Pancreas (tissue), 10 donors: ENCODE measurements at regions of chr1 and their contacts with region 1.

Region 1: GRCh38 chr1:205335643-205336091 is 14.1 kb upstream of the NUAK2 start:
- DNase-seq: peak; percentile 84 to 94 (median 90)
- ATAC-seq: peak; percentile 93 to 100 (median 98)
- H3K4me3 ChIP-seq: no peak overlapping the region
- H3K27ac ChIP-seq: no peak overlapping the region
- H3K4me1 ChIP-seq: no peaks in the 10 kb centered on the region
- H3K27me3 ChIP-seq: no peaks in the 10 kb centered on the region
- CTCF ChIP-seq: peak; percentile 90 to 98 (median 94)

Region 2: DNA sequence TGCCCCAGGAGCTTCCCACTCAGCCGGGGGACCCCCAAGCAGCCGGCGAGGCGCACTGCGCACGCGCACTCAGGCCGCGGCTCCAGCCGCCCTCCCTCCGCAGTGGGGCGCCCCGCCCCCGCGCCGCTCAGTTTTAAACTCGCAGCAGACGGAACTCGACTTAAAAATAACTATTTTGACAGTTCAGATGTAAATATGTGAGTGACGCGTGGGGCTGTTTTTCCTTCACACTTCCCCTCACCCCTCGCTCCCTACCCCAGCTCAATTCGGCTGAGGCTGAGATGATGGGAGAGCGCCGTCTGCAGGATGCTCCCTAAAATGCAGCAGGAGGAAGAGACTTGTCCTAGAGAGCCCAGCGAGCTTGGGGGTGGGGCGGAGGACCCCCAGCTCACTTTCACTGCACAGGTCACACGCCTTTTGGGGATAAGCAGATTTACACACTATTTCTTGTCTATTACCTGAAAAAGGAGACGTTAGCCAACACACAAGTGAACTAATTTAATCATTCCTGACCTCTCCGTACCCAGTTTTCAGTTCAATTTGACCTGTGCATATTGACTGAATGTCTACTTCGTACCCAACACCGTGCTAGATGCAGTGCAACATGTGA is 95.1 kb after region 1 on chr1:
- intact Hi-C with region 1: loop called in 2 of 3 experiments (anchors 5 to 10 kb)
- DNase-seq: peak; percentile 41 to 84 (median 60)
- ATAC-seq: peak; percentile 72 to 97 (median 89)
- H3K4me3 ChIP-seq: peak overlapping the region; percentile 19 to 54 (median 39)
- H3K27ac ChIP-seq: no peak overlapping the region
- H3K4me1 ChIP-seq: no peaks in the 10 kb centered on the region
- H3K27me3 ChIP-seq: no peaks in the 10 kb centered on the region
- CTCF ChIP-seq: peak; percentile 47 to 89 (median 70)

Region 3: DNA sequence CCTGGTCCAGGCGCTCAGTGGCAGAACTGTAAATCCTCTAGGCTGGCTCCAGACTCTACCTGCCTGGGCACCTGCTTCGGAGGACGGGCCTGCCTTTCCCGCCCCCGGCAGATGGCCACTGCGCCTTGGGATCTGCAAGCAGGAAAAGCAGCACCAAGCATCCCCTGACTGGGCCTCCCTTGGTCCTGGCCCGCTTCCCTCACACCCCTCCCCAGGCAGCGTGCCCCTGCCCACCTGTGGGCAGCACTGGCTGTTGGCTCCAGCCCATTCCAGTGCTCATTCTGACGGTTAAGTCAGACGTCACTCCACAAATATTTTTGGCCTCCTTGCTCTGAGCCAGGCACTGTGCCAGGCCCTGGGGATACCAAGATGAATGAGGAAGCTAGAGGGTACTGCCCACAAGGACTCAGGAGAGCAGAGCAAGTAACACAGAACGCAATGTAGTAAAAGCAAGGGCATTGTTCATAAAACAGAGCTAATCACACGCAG is 142.1 kb after region 1 on chr1:
- intact Hi-C with region 1: loop called in 2 of 3 experiments (anchors 5 to 10 kb)
- DNase-seq: peak; percentile 60 to 87 (median 82)
- ATAC-seq: peak; percentile 76 to 86 (median 84)
- H3K4me3 ChIP-seq: no peak overlapping the region
- H3K27ac ChIP-seq: peak overlapping the region; percentile 75 to 83 (median 81)
- H3K4me1 ChIP-seq: no peaks in the 10 kb centered on the region
- H3K27me3 ChIP-seq: no peaks in the 10 kb centered on the region
- CTCF ChIP-seq: no peak

Region 4: DNA sequence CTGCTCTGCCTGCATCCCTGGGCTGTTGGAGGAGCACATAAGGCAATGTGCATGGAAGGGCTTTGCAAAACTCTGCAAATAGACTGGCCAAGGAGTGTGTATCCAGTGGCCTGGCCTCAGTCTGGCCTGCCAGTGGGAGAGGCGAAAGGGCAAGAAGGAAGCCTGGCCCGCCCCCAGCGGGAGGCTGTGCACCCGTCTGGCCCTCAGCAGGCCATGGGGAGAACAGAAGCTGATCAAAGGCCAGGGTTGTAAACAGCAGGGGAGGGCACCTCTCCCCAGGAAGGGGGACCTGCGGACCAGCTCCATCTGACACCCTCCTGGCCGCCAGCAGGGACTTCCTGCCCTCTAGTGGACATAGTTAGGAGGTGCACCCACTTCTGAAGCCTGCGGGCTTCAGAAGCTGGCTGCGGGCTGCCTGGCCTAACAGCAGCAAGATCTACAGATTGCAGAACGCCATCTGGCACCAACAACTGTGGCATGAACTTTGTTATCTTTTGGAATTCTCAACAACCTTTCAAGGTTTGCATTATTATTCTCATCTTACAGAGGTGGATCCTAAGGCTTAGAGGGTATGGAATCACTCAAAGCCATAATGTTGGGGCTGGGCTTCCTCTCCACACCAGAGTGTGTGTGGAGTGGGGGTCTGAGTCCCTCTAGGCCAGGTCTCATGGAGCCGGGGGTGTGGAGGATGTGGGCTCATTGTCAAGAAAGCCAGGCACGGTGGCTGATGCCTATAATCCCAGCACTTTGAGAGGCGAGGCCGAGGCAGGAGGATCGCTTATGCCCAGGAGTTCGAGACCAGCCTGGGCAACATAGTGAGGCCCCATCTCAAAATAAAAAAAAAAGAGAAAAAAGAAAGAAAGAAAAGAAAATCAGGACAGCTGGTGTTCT is 149.9 kb after region 1 on chr1:
- intact Hi-C with region 1: loop called in 2 of 3 experiments (anchors 5 to 10 kb)
- DNase-seq: peak; percentile 59 to 85 (median 70)
- ATAC-seq: peak; percentile 82 to 94 (median 92)
- H3K4me3 ChIP-seq: no peak overlapping the region
- H3K27ac ChIP-seq: no peak overlapping the region
- H3K4me1 ChIP-seq: no peaks in the 10 kb centered on the region
- H3K27me3 ChIP-seq: no peaks in the 10 kb centered on the region
- CTCF ChIP-seq: peak; percentile 85 to 98 (median 96)

Region 5: GRCh38 chr1:205528887-205529825 is 193.5 kb after region 1 on chr1:
- intact Hi-C with region 1: loop called in 1 of 3 experiments (anchors 10 kb)
- DNase-seq: peak; percentile 62 to 98 (median 82)
- ATAC-seq: peak; percentile 84 to 94 (median 87)
- H3K4me3 ChIP-seq: peak overlapping the region in 2 of 4 donors; percentile 3 to 26
- H3K27ac ChIP-seq: no peak overlapping the region
- H3K4me1 ChIP-seq: no peaks in the 10 kb centered on the region
- H3K27me3 ChIP-seq: no peaks in the 10 kb centered on the region
- CTCF ChIP-seq: peak; percentile 89 to 97 (median 93)

Region 6: GRCh38 chr1:205645519-205645918 is 309.9 kb after region 1 on chr1:
- intact Hi-C with region 1: loop called in 1 of 3 experiments (anchors 10 kb)
- DNase-seq: peak in 1 of 6 donors; percentile 24
- ATAC-seq: no peak
- H3K4me3 ChIP-seq: no peak overlapping the region
- H3K27ac ChIP-seq: no peak overlapping the region
- H3K4me1 ChIP-seq: no peaks in the 10 kb centered on the region
- H3K27me3 ChIP-seq: no peaks in the 10 kb centered on the region
- CTCF ChIP-seq: no peak